K562 (cell line): ENCODE measurements at regions of chr5 and their contacts with region 1.

Region 1: DNA sequence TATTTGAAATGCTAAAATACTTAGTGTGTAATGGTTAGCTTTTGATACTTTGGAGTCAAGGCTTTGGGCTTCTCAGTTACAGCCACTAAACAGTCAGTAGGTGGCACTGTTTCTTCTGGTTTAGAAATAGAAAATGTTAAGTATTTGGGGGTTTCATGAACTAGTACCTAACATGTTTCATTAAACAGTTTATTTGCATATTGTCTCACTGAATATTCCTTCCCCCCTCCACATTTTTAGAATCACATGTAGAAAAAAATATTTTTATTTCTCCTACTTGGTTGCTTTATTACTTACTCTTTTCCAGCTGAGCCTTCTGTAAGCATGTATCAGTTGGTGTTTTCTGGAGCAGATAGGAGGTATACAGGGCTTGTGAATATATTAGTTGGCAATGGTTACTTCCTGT is 48.0 kb downstream of the IPO11 start:
- DNase-seq: peak; percentile 24 to 46 (median 30)
- ATAC-seq: peak; percentile 85
- H3K4me3 ChIP-seq: no peak overlapping the region
- H3K27ac ChIP-seq: no peak overlapping the region
- H3K4me1 ChIP-seq: no peaks in the 10 kb centered on the region
- H3K27me3 ChIP-seq: no peaks in the 10 kb centered on the region
- CTCF ChIP-seq: peak; percentile 37 to 82 (median 64); a peak in 5 of 6 replicates
- EP300 ChIP-seq: no peak
- POLR2A ChIP-seq: no peak
- RAD21 ChIP-seq: peak; percentile 57 to 83

Region 2: GRCh38 chr5:62506659-62507460 is 46.3 kb after region 1 on chr5:
- CTCF ChIA-PET with region 1: no interaction called
- POLR2A ChIA-PET with region 1: no interaction called
- in situ Hi-C with region 1: no loop called
- intact Hi-C with region 1: no loop called
- DNase-seq: no peak
- ATAC-seq: no peak
- H3K4me3 ChIP-seq: no peak overlapping the region
- H3K27ac ChIP-seq: no peak overlapping the region
- H3K4me1 ChIP-seq: no peaks in the 10 kb centered on the region
- H3K27me3 ChIP-seq: no peaks in the 10 kb centered on the region
- CTCF ChIP-seq: no peak
- EP300 ChIP-seq: no peak
- POLR2A ChIP-seq: no peak
- RAD21 ChIP-seq: no peak

Region 3: GRCh38 chr5:62562867-62563266 is 102.3 kb after region 1 on chr5:
- CTCF ChIA-PET with region 1: no interaction called
- POLR2A ChIA-PET with region 1: no interaction called
- in situ Hi-C with region 1: no loop called
- intact Hi-C with region 1: no loop called
- DNase-seq: no peak
- ATAC-seq: no peak
- H3K4me3 ChIP-seq: no peak overlapping the region
- H3K27ac ChIP-seq: no peak overlapping the region
- H3K4me1 ChIP-seq: no peaks in the 10 kb centered on the region
- H3K27me3 ChIP-seq: no peaks in the 10 kb centered on the region
- CTCF ChIP-seq: no peak
- EP300 ChIP-seq: no peak
- POLR2A ChIP-seq: no peak
- RAD21 ChIP-seq: no peak

Region 4: DNA sequence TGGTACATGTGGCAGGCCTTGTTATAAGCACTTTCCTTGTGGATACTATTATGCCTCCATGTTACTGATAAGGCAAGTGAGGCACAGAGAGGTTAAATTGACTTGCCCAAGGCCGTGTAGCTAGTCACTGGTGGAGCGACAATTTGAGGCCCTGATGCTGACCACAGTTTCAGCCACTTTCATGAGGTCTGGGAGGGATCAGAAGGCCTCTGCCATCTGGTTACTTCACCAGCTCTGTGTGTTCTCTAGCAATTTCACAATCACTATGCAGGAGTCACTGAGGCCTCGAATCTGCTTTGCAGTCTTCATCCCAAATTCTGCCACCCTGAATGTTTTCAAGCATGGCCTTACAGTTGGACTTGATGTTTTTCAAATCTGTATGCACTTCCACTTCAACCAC is 127.2 kb after region 1 on chr5:
- CTCF ChIA-PET with region 1: no interaction called
- POLR2A ChIA-PET with region 1: no interaction called
- in situ Hi-C with region 1: no loop called
- intact Hi-C with region 1: loop called (anchors 2 kb)
- DNase-seq: no peak
- ATAC-seq: no peak
- H3K4me3 ChIP-seq: no peak overlapping the region
- H3K27ac ChIP-seq: no peak overlapping the region
- H3K4me1 ChIP-seq: peaks cover 3 to 15% of the 10 kb centered on the region in 2 experiments; a peak in 2 of 5 replicates
- H3K27me3 ChIP-seq: no peaks in the 10 kb centered on the region
- CTCF ChIP-seq: no peak
- EP300 ChIP-seq: no peak
- POLR2A ChIP-seq: no peak
- RAD21 ChIP-seq: no peak

Region 5: DNA sequence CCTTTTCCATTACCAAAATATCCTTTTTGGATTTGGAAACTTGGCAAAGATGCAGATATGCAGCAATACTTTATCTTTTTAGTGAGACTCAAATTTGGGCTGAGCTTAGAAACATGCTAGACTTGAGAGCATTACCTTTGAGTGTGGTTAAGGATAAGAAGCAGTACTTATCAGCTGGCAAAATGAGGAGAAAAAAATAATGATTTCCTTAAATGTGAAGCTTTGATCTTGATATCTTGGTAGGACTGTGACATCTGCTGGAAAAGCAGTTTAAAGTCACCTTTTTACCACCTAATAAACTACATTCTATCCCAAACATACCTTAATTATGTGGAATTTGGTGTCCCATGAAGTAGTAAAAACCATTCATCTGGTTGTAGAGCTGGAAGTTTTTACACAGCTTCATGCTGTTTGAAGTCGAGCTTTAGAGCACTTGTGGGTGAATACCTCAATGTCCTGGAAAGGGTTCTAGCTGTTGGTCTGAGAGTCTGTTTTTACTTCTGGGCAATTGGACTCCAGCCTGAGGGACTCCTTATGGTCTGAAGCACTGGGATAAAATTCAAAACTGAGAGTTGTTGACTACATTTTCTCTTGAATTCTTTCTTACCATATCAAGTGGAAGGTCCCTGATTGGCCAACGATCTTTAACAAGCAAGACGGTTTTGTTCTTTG is 171.5 kb after region 1 on chr5:
- CTCF ChIA-PET with region 1: interaction called, 6 read pairs
- POLR2A ChIA-PET with region 1: no interaction called
- in situ Hi-C with region 1: no loop called
- intact Hi-C with region 1: loop called (anchors 5 kb)
- DNase-seq: no peak
- ATAC-seq: no peak; the same call in 2 of the 3 replicates
- H3K4me3 ChIP-seq: no peak overlapping the region
- H3K27ac ChIP-seq: no peak overlapping the region
- H3K4me1 ChIP-seq: no peaks in the 10 kb centered on the region
- H3K27me3 ChIP-seq: no peaks in the 10 kb centered on the region
- CTCF ChIP-seq: no peak
- EP300 ChIP-seq: no peak
- POLR2A ChIP-seq: no peak
- RAD21 ChIP-seq: peak; percentile 5 to 31; a peak in 2 of 4 replicates